Right ventricle myocardium inferior (tissue), 1 donor: ENCODE measurements at regions of chr9 and their contacts with region 1.

Region 1: GRCh38 chr9:134371731-134372130 is 45.5 kb downstream of the RXRA start:
- DNase-seq: peak; percentile 94
- ATAC-seq: peak; percentile 22

Region 2: GRCh38 chr9:134341306-134341705 is 30.4 kb before region 1 on chr9:
- intact Hi-C with region 1: loop called (anchors 2 kb)
- DNase-seq: no peak
- ATAC-seq: peak; percentile 37

Region 3: DNA sequence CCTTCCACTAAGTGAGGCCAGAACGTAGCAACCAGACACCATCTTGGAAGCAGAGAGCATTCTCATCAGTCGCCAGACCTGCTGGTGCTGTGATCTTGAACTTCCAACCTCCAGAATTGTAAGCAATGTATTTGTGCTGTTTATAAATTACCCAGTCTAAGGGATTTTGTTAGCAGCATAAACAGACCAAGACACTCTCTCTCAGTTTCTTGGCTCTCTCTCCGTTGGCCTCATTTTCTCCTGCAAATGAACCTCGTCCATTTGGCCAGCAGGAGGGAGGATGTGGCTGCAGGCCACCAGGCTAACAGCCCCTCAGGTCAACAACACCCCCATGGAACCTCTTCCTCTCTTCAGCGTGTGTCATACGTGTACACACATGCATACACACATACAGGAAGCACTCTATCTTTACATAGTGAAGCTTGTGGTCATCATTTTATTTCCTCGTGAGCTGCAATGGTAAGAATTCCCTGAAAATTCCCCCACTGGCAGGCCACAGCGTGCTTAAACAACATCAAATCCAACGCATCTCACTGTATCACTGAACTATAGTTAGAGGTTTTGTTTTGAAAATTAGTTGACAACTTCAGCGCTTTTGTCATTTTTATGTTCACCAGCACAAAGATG is 1045.0 kb after region 1 on chr9:
- intact Hi-C with region 1: no loop called
- DNase-seq: no peak
- ATAC-seq: no peak